Gastrocnemius medialis (tissue), 4 donors: ENCODE measurements at regions of chr19 and their contacts with region 1.

Region 1: GRCh38 chr19:15280915-15281683 is 48.9 kb upstream of the EPHX3 start:
- DNase-seq: peak; percentile 93 to 96
- ATAC-seq: peak; percentile 69 to 75
- H3K4me3 ChIP-seq: peak overlapping the region in 1 of 4 donors; percentile 10
- H3K27ac ChIP-seq: peak overlapping the region; percentile 88 to 93 (median 90)
- H3K4me1 ChIP-seq: peaks cover 96 to 99% of the 10 kb centered on the region in 2 donors
- H3K27me3 ChIP-seq: no peaks in the 10 kb centered on the region
- CTCF ChIP-seq: no peak
- POLR2A ChIP-seq: peak; percentile 31 to 42

Region 2: DNA sequence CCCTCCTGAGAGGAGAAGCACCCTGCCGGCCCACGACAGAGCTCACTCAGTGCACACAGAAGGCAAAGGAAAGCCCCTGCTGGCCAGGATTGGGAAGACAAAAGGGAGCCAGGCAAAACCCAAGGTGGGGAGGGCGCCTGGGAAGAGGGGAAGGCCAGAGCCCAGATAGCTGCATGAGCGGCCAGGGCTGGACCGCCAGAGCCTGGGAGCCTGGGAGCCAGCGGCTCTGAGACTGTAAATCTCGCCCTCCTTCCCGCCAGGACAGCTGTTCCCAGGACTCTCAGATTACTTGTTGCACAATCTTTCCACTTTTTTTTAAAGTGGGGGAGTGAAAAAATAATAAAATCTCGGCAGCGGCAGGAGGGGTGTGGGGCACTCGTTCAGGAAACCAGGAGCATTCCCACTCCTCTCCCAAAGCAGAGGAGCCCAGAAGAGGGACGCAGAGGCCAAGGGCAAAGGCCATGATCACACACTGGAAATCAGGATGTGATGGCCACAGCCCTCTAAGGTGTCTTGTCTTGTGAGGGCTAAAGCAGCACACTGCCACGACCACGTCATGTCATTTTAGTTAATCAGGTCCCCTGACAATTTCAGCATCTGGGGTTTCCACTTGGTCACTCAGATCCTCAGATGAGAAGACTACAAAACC is 29.2 kb before region 1 on chr19:
- in situ Hi-C with region 1: no loop called
- intact Hi-C with region 1: loop called (anchors 2 kb)
- DNase-seq: peak; percentile 79 to 95
- ATAC-seq: peak; percentile 73 to 77
- H3K4me3 ChIP-seq: peak overlapping the region in 3 of 4 donors; percentile 24 to 45 (median 34)
- H3K27ac ChIP-seq: peak overlapping the region; percentile 84 to 96 (median 90)
- H3K4me1 ChIP-seq: peaks cover 70 to 71% of the 10 kb centered on the region in 2 donors
- H3K27me3 ChIP-seq: no peaks in the 10 kb centered on the region
- CTCF ChIP-seq: peak; percentile 41 to 67 (median 54)
- POLR2A ChIP-seq: peak in 1 of 2 donors; percentile 25

Region 3: GRCh38 chr19:15264061-15264932 is 16.8 kb before region 1 on chr19:
- in situ Hi-C with region 1: no loop called
- intact Hi-C with region 1: no loop called
- DNase-seq: peak in 1 of 2 donors; percentile 65
- ATAC-seq: peak; percentile 14 to 31
- H3K4me3 ChIP-seq: no peak overlapping the region
- H3K27ac ChIP-seq: peak overlapping the region; percentile 61 to 80 (median 68)
- H3K4me1 ChIP-seq: peaks cover 50 to 54% of the 10 kb centered on the region in 2 donors
- H3K27me3 ChIP-seq: no peaks in the 10 kb centered on the region
- CTCF ChIP-seq: peak; percentile 68 to 88 (median 78)
- POLR2A ChIP-seq: no peak

Region 4: DNA sequence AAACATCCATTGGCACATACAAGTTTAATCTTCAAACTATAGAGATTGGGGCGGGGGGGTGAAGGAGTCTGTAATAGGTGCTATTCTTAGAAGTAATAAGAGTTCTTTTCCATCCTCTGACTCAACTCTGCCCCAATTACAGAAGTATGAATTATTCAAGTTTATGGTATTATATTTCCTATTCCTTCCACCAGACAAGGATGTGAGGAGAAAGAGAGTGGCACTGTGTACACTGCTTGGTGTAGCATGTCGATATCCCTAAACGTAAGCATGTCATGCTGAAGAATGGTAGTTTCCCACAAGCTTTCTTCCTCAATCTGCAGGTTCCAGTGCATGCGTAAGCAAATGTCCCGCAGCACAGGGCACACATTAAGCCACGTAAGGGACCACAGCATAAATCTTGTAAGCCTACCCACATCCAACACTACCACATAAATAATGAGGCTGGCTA is 37.2 kb after region 1 on chr19:
- in situ Hi-C with region 1: loop called in 2 of 4 experiments (anchors 5 to 10 kb)
- intact Hi-C with region 1: loop called (anchors 2 kb)
- DNase-seq: no peak
- ATAC-seq: peak; percentile 45 to 53
- H3K4me3 ChIP-seq: peak overlapping the region in 1 of 4 donors; percentile 7
- H3K27ac ChIP-seq: peak overlapping the region; percentile 77 to 98 (median 90)
- H3K4me1 ChIP-seq: peaks cover 96 to 98% of the 10 kb centered on the region in 2 donors
- H3K27me3 ChIP-seq: no peaks in the 10 kb centered on the region
- CTCF ChIP-seq: no peak
- POLR2A ChIP-seq: no peak

Region 5: GRCh38 chr19:15323496-15324227 is 42.6 kb after region 1 on chr19:
- in situ Hi-C with region 1: loop called in 2 of 4 experiments (anchors 5 to 10 kb)
- intact Hi-C with region 1: no loop called
- DNase-seq: peak; percentile 68 to 69
- ATAC-seq: peak; percentile 89 to 91
- H3K4me3 ChIP-seq: peak overlapping the region in 2 of 4 donors; percentile 3 to 7
- H3K27ac ChIP-seq: peak overlapping the region; percentile 87 to 98 (median 92)
- H3K4me1 ChIP-seq: peaks cover 96 to 100% of the 10 kb centered on the region in 2 donors
- H3K27me3 ChIP-seq: no peaks in the 10 kb centered on the region
- CTCF ChIP-seq: no peak
- POLR2A ChIP-seq: peak; percentile 25 to 42

Region 6: DNA sequence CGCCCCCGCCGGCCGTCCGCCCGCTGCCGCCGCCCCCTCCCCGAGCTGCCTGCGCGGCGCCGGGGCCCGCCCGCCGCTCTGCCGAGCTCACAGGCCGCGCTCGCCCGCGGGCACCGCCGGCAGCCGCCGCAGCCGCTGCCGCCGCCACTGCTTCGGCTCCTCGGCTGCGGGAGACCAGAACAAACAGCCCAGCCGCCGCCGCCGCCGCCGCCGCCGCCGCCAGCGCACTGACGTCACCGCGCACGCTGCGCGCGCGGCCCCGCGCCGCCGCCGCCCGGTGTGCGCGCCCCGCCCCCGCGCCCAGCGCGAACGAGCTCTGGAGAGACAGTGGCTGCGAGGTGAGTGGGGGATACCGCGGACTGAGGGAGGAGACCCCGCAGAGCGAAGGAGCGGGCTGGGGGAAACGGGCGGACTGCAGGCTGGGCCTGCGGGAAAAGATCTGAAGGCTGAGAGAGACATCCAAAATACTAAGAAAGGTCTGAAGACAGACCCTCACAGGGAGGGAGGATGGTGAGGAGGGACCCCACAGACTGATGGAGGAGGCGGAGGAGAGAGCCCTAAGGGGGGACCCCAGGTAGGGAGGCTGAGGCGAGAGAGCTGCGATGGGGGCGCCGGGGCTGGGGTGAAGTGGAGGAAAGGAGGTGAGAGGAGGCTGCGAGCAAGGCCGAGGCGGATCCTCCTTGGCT is 51.4 kb after region 1 on chr19 and contains the start of gene BRD4:
- in situ Hi-C with region 1: loop called in 1 of 4 experiments (anchors 10 kb)
- intact Hi-C with region 1: loop called (anchors 2 kb)
- DNase-seq: peak; percentile 38 to 62
- ATAC-seq: peak; percentile 63 to 72
- H3K4me3 ChIP-seq: peak within 1 kb of the TSS; percentile 82 to 97 (median 96)
- H3K27ac ChIP-seq: peak within 1 kb of the TSS; percentile 91 to 98 (median 96)
- H3K4me1 ChIP-seq: peaks cover 66 to 70% of the 10 kb centered on the region in 2 donors
- H3K27me3 ChIP-seq: no peaks in the 10 kb centered on the region
- CTCF ChIP-seq: no peak
- POLR2A ChIP-seq: peak; percentile 72 to 78
- total RNA-seq, gene BRD4: 64.8 to 83.2 (median 73.9) TPM

Region 7: GRCh38 chr19:15418588-15419412 is 137.7 kb after region 1 on chr19 and contains the start of gene AKAP8L:
- in situ Hi-C with region 1: no loop called
- intact Hi-C with region 1: loop called (anchors 2 kb)
- DNase-seq: peak; percentile 100
- ATAC-seq: peak; percentile 94 to 95
- H3K4me3 ChIP-seq: peak within 1 kb of the TSS; percentile 78 to 93 (median 90)
- H3K27ac ChIP-seq: peak within 1 kb of the TSS; percentile 91 to 97 (median 96)
- H3K4me1 ChIP-seq: peaks cover 54 to 60% of the 10 kb centered on the region in 2 donors
- H3K27me3 ChIP-seq: no peaks in the 10 kb centered on the region
- CTCF ChIP-seq: peak; percentile 42 to 64 (median 59)
- POLR2A ChIP-seq: peak; percentile 98 to 99
- total RNA-seq, gene AKAP8L: 69.3 to 142 (median 85.6) TPM

Region 8: GRCh38 chr19:15672580-15673175 is 391.6 kb after region 1 on chr19 and contains the start of gene CYP4F12:
- in situ Hi-C with region 1: no loop called
- intact Hi-C with region 1: no loop called
- DNase-seq: peak; percentile 7 to 62
- ATAC-seq: peak; percentile 33 to 66
- H3K4me3 ChIP-seq: peak within 1 kb of the TSS in 1 of 4 donors; percentile 20
- H3K27ac ChIP-seq: peak within 1 kb of the TSS; percentile 25 to 43 (median 32)
- H3K4me1 ChIP-seq: no peaks in the 10 kb centered on the region
- H3K27me3 ChIP-seq: no peaks in the 10 kb centered on the region
- CTCF ChIP-seq: no peak
- POLR2A ChIP-seq: no peak
- total RNA-seq, gene CYP4F12: 0.71 to 2.8 (median 1.3) TPM